ENCODE measurements at regions of chr6 and their contacts with region 1.

Region 1: GRCh38 chr6:12962987-12963386 is 246.4 kb downstream of the PHACTR1 start:
- DNase-seq: no peak
- H3K4me3 ChIP-seq: peak overlapping the region; percentile 58
- H3K27ac ChIP-seq: peak overlapping the region; percentile 90
- H3K4me1 ChIP-seq: peaks cover 73% of the 10 kb centered on the region
- H3K27me3 ChIP-seq: no peaks in the 10 kb centered on the region
- CTCF ChIP-seq: no peak

Region 2: GRCh38 chr6:13006578-13007300 is 43.8 kb after region 1 on chr6:
- intact Hi-C with region 1: loop called (anchors 5 kb)
- DNase-seq: no peak
- H3K4me3 ChIP-seq: peak overlapping the region; percentile 12
- H3K27ac ChIP-seq: peak overlapping the region; percentile 77
- H3K4me1 ChIP-seq: peaks cover 50% of the 10 kb centered on the region
- H3K27me3 ChIP-seq: no peaks in the 10 kb centered on the region
- CTCF ChIP-seq: no peak